ENCODE measurements at regions of chr7 and their contacts with region 1.

Region 1: DNA sequence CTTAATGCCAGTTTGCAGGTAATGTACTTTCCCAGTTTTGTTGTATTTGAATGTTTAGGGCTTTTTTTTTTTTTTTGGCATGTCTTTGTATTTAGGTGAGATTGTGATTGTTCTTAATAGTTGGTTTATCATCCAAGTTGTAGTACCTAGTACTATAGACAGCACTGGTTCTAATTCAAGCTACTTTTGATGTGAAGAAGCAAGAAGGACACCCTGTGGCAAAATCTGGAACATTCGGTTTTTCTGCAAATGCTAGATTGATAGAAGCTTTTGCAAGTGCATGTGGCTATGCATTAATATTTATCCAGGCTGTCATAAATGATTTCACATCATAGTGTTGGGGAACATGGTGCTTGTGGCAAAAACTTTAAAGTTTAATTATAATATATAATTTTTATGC is 248.9 kb downstream of the FOXP2 start:
- DNase-seq: peak in 1 of 4 donors; percentile 35
- ATAC-seq: no peak
- H3K4me3 ChIP-seq: no peak overlapping the region
- H3K27ac ChIP-seq: no peak overlapping the region
- H3K4me1 ChIP-seq: no peaks in the 10 kb centered on the region
- H3K27me3 ChIP-seq: no peaks in the 10 kb centered on the region
- CTCF ChIP-seq: no peak

Region 2: DNA sequence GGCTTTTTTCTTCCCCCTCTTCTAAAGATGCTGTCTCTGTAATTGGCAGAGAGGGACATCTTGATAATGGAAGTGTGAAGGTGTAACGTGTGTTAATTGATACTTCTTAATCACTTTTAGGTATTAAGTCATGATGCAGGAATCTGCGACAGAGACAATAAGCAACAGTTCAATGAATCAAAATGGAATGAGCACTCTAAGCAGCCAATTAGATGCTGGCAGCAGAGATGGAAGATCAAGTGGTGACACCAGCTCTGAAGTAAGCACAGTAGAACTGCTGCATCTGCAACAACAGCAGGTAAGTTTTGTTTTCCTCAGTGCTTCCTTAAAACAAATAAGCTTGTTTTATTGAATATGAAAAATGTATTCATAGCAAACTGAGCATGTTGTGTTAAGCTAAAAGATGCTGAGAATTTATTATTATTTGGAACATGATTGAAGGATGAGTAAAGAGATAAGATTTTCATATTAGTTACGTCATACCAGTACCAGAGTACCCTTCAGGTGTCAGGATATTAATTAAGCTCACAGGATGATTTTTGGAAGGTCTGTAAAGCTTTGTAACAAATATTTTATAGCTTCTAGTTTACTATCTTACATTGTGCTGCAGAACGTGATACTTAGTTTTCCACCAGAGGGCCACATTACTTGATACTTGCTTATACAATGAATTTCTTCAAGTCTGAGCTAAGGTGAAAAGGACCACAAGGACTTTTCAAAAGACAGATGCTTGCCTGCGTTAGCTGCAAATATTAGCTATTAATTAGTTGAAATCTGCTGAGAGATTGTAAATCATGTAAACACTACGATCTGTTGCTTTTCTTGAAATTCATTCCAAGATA is 236.9 kb before region 1 on chr7:
- intact Hi-C with region 1: loop called in 1 of 2 experiments (anchors 5 kb)
- DNase-seq: peak in 1 of 4 donors; percentile 43
- ATAC-seq: no peak
- H3K4me3 ChIP-seq: no peak overlapping the region
- H3K27ac ChIP-seq: no peak overlapping the region
- H3K4me1 ChIP-seq: no peaks in the 10 kb centered on the region
- H3K27me3 ChIP-seq: no peaks in the 10 kb centered on the region
- CTCF ChIP-seq: no peak

Measured in left lung (tissue), 14 donors.